Activated CD4-positive, alpha-beta T cell treated with anti-CD3 and anti-CD28 coated beads, Interleukin-2, amount 10 ng/mL, durations not matched to agents 24 days and 14 days (primary cell): ENCODE measurements at regions of chr7 and their contacts with region 1.

Region 1: GRCh38 chr7:24819916-24820689 is 62.8 kb upstream of the GSDME start:
- DNase-seq: peak; percentile 94
- H3K4me3 Mint-ChIP-seq: peak overlapping the region; percentile 71
- H3K27ac Mint-ChIP-seq: peak overlapping the region; percentile 96
- H3K4me1 Mint-ChIP-seq: peaks cover 44% of the 10 kb centered on the region
- H3K27me3 Mint-ChIP-seq: no peaks in the 10 kb centered on the region

Region 2: DNA sequence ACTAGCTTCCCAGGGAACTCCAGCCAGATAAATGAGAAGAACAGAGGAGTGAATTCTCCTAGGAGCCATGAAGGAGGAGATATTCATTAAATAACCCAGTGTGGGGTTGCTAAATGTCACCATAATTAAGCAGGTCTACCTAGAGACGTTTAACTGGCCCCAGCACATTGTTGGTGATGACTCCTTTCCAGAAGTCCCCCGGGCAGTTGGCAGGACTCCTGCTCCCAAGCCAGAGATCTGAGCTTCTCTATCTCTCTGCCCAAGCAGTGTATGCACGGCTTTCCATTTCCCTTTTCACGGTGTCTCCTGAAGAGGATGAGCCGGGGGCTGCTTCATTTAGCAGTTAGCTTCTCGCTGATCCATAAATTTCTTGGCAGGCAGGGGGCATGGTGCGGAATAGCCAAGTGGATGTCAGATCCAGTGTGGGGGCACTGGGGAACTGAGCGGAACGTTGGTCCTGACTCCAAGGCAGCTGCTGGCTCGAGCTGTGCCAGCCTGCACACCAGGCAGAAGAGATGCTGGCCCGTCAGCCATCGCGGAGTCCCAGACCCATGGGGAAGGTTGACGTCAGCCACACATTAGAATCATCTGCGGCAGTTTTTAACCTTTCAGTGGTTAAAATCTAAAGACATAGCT is 678.1 kb before region 1 on chr7:
- intact Hi-C with region 1: no loop called
- DNase-seq: no peak
- H3K4me3 Mint-ChIP-seq: no peak overlapping the region
- H3K27ac Mint-ChIP-seq: no peak overlapping the region
- H3K4me1 Mint-ChIP-seq: no peaks in the 10 kb centered on the region
- H3K27me3 Mint-ChIP-seq: peaks cover 8% of the 10 kb centered on the region

Region 3: DNA sequence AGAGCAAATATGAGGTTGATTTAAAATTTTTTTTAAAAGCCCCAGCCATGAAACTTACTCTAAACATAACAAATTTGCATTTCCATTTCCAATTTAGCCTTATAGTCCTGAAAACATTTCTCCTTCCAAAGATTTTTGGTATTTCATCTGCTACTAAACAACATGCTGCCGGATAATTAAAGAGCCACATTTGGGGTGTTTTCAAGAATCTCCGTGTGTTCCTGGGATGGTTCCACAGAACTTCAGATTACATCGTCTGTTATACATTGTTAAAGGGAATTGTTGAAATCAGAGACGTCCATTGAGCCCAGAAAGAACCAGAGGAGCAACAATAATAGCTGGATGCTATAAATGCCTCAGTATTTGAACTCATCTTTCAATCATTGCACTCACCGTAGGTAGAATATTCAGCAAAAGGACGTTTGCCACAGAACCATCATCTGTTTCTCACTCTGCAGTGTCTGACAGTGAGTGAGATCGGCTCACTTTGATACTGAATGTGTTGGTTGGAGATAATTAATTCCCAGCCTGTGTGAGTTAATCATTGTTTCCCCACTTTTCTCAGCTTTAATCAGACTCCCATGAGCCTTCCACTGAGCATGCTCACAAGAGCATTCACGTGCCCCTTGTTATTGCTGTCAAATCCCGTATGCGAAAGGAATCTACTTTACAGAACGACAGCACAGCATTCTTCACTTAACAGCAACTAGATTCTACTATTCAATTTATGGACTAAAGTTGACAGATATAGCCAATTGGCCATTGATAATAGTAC is 375.2 kb before region 1 on chr7:
- intact Hi-C with region 1: no loop called
- DNase-seq: no peak
- H3K4me3 Mint-ChIP-seq: no peak overlapping the region
- H3K27ac Mint-ChIP-seq: no peak overlapping the region
- H3K4me1 Mint-ChIP-seq: peaks cover 10% of the 10 kb centered on the region
- H3K27me3 Mint-ChIP-seq: peaks cover 5% of the 10 kb centered on the region

Region 4: DNA sequence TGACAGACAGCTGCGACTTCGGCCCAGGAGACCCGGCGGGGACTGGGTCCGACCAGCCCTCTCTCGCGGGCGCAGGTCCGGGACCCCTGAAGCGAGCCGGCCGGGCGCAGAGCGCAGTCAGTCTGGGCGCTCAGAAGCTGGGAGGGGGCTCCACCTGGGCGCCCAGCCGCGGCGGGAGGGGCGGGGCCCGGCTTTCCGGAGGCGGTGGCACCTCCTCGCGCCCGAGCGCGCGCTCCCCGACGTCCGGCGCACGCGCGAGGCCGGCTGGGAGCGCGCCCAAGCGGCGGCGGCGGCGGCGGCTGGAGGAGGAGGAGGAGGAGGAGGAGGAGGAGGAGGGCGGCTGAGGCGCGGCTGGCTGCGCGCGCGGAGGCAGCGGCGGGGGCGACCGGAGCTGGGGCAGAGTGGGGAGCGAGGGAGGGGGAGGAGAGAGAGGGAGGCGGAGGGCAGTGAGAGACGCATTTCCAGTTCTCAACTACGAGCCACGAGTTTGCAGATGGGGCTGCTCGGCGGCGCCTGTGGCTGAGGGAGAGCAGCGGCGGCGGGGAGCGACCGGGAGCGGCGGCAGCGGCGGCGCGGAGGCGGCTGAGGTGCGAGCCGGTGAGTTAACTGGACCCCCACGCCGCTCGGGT is 247.0 kb before region 1 on chr7 and contains the start of gene PALS2:
- intact Hi-C with region 1: loop called (anchors 5 kb)
- DNase-seq: peak; percentile 94
- H3K4me3 Mint-ChIP-seq: peak within 1 kb of the TSS; percentile 99
- H3K27ac Mint-ChIP-seq: peak within 1 kb of the TSS; percentile 89
- H3K4me1 Mint-ChIP-seq: peaks cover 32% of the 10 kb centered on the region
- H3K27me3 Mint-ChIP-seq: peaks cover 47% of the 10 kb centered on the region
- total RNA-seq, gene PALS2: 38.5 and 39.5 TPM in 2 replicates

Region 5: GRCh38 chr7:24877790-24878311 is 57.7 kb after region 1 on chr7:
- intact Hi-C with region 1: loop called (anchors 2 kb)
- DNase-seq: peak; percentile 76
- H3K4me3 Mint-ChIP-seq: peak overlapping the region; percentile 73
- H3K27ac Mint-ChIP-seq: peak overlapping the region; percentile 84
- H3K4me1 Mint-ChIP-seq: peaks cover 47% of the 10 kb centered on the region
- H3K27me3 Mint-ChIP-seq: no peaks in the 10 kb centered on the region

Region 6: GRCh38 chr7:24948739-24949138 is 128.6 kb after region 1 on chr7:
- intact Hi-C with region 1: no loop called
- DNase-seq: no peak
- H3K4me3 Mint-ChIP-seq: no peak overlapping the region
- H3K27ac Mint-ChIP-seq: peak overlapping the region; percentile 29
- H3K4me1 Mint-ChIP-seq: peaks cover 50% of the 10 kb centered on the region
- H3K27me3 Mint-ChIP-seq: no peaks in the 10 kb centered on the region

Region 7: DNA sequence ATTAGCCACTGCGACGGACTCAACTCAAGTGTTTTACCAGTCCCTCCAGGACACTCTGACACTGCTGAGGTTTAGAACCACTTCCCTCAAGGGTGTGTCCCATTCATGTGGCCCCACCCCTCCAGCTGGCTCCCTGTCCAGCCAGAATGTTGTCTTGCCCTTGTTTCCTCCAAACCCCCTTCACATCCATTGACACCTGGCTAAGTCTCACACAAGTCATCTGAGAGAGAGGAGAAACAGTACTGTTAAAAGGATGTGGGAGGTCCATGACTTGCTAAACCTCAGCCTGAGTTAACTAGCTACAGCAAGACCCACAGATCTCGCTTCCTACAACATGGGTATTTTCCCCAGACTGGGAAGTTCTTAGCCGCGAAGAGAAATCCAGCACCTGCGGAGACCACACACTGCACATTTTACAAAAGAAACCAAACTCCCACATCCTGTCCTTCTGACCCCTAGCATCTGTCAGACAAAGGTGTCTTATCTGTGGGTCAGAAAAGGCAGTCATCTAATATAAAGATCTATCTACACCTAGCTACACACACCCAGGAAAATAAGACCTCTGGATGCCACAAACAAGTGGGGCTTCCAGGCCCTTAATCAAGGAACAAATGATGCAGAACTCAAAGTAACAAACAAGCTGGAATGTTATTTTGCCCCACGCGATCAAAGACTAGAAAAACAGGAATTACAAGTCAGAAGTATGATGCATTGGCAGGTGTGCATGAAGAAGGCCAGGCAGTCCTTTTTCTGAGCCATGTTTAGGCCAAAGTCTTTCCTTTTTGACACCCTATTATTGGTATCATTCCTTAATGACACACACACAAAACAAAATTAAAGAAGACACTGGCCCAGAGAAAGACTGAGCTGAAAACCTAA is 146.0 kb after region 1 on chr7:
- intact Hi-C with region 1: loop called (anchors 1 kb)
- DNase-seq: peak; percentile 88
- H3K4me3 Mint-ChIP-seq: peak overlapping the region; percentile 75
- H3K27ac Mint-ChIP-seq: peak overlapping the region; percentile 84
- H3K4me1 Mint-ChIP-seq: peaks cover 76% of the 10 kb centered on the region
- H3K27me3 Mint-ChIP-seq: no peaks in the 10 kb centered on the region

Region 8: GRCh38 chr7:25069900-25070443 is 249.9 kb after region 1 on chr7:
- intact Hi-C with region 1: loop called (anchors 1 kb)
- DNase-seq: peak; percentile 85
- H3K4me3 Mint-ChIP-seq: no peak overlapping the region
- H3K27ac Mint-ChIP-seq: no peak overlapping the region
- H3K4me1 Mint-ChIP-seq: peaks cover 19% of the 10 kb centered on the region
- H3K27me3 Mint-ChIP-seq: no peaks in the 10 kb centered on the region

Region 9: DNA sequence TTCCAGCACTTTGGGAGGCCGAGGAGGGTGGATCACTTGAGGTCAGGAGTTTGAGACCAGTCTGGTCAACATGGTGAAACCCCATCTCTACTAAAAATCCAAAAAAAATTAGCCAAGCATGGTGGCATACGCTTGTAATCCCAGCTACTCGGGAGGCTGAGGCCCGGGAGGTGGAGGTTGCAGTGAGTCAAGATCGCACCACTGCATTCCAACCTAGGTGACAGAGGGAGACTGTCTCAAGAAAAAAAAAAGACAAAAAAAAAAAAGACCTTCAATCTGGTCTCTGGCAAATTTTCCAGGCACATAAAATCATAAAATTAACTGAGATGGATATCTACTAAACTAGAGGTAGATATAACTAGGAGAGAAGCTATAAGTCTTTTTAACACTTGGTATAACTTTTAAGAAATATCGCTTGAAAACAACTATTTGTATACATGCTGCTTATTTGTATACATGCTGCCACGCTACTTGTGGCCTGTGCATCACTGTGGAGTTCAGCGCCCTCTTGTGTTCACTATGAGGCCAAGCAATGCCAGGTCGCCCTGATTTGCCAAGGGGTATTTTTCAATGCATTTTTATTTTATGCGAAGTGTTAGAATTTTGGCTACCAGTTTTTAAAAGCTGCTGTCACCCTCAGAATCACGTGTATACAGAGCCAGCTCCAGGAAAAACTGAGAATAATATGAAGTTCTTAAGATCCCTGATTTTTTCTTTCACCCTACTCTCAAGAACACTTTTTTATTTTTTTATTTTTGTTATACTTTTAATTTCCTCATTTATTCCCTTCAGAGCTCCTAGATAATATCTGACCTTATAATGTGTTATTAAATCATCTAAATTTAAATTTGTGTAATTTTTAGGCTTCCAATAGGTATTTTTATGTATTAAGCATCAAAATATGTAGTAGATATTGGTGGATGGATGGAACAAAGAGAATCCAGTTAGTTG is 278.3 kb after region 1 on chr7:
- intact Hi-C with region 1: loop called (anchors 1 kb)
- DNase-seq: peak; percentile 88
- H3K4me3 Mint-ChIP-seq: no peak overlapping the region
- H3K27ac Mint-ChIP-seq: no peak overlapping the region
- H3K4me1 Mint-ChIP-seq: peaks cover 10% of the 10 kb centered on the region
- H3K27me3 Mint-ChIP-seq: peaks cover 7% of the 10 kb centered on the region

Region 10: DNA sequence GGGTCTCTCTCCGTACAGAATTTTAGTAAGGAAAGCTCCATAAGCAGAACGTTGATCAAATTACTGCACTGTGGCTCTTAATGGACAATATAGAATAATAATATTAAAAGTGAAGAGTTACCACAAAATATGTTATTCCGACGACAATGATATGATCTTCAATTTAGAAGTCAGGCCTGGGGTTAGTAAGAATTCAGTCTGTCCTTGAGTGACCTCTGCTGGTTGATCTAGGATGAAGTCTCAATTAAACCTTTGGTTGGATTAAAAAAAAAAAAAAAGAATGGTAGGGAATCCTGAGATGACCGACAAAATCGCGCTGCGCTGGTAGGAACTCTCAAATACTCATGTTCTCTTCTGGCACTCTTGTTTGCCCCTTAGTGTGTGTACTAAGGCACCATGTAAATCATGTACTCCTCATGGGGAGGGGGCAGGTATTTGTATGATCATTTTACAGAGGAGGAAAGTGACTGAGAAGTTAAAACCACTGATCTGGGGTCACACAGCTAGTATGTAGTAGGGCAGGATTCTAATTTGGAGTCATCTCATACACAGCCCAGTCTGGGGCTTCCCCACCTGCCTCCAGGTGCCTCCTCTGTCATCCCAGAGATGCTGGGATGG is 569.5 kb after region 1 on chr7:
- intact Hi-C with region 1: no loop called
- DNase-seq: peak; percentile 69
- H3K4me3 Mint-ChIP-seq: no peak overlapping the region
- H3K27ac Mint-ChIP-seq: no peak overlapping the region
- H3K4me1 Mint-ChIP-seq: no peaks in the 10 kb centered on the region
- H3K27me3 Mint-ChIP-seq: peaks cover 12% of the 10 kb centered on the region